ENCODE measurements at regions of chr13 and their contacts with region 1.

Region 1: DNA sequence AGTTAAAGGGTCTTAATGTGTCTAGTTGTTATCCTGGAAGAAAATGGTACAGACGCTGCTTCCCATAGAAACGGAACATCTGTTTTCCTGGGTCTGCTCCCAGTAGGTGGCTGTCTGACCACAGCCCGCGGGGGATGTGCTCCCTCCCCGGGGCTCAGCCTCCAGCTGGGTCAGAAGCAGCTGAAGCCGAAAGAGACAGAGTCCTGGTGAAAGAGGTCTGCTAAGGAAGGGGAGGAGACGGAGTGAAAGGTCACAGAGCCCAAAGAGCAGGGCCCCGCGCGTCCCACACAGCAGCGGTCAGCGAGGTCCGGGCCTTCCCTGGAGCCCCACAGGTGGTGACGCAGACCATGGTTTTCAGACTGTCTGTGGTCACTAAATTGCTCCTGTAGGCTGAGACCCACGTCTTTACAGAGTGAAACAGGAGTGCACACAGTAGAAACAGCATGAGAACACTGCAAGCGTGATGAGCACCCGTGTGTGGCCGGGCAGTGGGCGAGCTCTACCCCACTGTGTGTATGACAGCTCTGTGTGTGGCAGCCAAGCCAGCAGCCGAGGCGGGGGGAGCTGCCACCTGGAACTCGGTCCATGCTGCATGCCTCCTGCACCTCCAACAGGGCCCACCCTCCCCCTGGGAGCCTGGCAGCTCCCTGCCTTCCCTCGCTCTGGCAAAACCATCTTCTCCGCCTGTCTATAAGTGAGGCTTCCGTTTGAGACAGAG is 52.0 kb upstream of the C13orf46 start:
- DNase-seq: peak; percentile 31
- H3K4me3 ChIP-seq: peak overlapping the region; percentile 64
- H3K27ac ChIP-seq: peak overlapping the region; percentile 89
- H3K4me1 ChIP-seq: peaks cover 69% of the 10 kb centered on the region
- CTCF ChIP-seq: no peak; the same call in 1 of the 2 replicates

Region 2: DNA sequence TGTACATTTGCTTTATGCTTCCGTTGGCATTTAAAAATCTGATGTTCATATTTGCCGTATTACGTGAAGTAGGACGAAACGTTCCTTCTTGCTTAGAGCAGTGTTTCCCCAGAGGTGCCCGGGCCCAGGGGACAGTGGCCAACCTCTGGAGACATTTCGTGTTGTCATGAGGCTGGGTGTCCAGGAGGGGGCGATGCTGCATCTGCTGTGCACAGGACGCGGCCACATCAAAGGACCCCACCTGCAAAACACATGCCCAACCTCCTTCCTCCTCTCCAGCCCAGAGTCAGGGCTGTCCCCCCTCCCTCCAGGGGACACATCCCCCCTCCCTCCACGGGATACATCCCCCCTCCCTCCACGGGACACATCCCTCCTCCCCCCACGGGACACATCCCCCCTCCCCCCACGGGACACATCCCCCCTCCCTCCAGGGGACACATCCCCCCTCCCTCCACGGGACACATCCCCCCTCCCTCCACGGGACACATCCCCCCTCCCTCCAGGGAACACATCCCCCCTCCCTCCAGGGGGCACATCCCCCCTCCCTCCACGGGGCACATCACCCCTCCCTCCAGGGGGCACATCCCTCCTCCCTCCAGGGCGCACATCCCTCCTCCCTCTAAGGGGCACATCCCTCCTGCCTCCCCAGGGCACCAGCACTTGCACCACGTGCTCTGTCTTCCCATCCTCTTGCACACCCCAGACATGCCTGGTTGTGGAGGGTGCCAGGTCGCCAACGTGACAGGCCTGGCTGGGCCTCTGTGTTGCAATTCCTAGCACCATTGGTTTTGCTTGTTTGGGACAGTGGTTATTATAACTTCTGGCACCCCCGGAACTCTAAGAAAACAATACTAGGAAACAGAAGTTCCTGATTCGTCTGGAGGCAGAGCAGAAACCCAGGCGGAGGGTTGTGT is 208.7 kb before region 1 on chr13:
- CTCF ChIA-PET with region 1: no interaction called
- POLR2A ChIA-PET with region 1: no interaction called
- intact Hi-C with region 1: loop called (anchors 5 kb)
- DNase-seq: peak; percentile 83
- H3K4me3 ChIP-seq: peak overlapping the region; percentile 98
- H3K27ac ChIP-seq: peak overlapping the region; percentile 34
- H3K4me1 ChIP-seq: peaks cover 4% of the 10 kb centered on the region
- CTCF ChIP-seq: peak; percentile 70

Region 3: DNA sequence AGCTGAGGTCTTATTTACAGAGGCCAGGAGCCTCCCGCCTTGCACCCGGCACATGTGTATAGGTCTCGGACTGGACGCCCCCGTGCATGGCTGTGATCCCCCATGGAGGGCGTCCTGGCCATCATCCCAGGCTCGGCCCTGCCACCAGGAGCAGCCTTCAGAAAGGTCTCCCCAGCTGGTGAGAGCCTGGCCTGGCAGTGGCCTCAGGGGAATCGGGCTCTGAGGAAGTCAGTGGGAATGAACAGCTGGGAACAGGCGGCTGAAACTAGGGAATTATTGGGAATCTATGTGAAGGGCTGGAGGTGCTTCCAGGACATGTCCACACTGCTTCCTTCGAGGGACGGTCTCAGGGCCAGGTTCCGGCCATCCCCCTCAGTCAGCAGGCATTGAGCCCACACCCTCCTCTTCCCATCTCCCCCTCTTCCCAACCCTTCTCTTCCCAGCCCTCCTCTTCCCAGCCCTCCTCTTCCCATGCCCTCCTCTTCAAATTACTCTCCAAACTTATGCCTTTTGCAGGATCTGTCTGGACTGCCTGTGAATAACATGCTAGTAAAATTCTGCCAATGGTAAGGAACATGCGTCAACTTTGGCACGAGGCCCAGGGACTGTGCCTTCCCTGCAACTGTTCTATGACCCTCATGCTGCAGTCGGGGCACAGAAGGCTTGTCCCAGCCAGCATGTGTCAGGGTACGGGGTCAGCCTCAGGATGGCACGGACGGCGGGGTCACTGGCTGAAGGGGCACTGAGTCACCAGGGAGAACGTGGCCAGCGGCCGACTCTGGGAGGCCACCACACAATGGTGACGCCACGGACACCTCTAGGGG is 27.8 kb before region 1 on chr13:
- CTCF ChIA-PET with region 1: no interaction called
- POLR2A ChIA-PET with region 1: no interaction called
- intact Hi-C with region 1: no loop called
- DNase-seq: no peak
- H3K4me3 ChIP-seq: no peak overlapping the region
- H3K27ac ChIP-seq: no peak overlapping the region
- H3K4me1 ChIP-seq: no peaks in the 10 kb centered on the region
- CTCF ChIP-seq: no peak

Region 4: DNA sequence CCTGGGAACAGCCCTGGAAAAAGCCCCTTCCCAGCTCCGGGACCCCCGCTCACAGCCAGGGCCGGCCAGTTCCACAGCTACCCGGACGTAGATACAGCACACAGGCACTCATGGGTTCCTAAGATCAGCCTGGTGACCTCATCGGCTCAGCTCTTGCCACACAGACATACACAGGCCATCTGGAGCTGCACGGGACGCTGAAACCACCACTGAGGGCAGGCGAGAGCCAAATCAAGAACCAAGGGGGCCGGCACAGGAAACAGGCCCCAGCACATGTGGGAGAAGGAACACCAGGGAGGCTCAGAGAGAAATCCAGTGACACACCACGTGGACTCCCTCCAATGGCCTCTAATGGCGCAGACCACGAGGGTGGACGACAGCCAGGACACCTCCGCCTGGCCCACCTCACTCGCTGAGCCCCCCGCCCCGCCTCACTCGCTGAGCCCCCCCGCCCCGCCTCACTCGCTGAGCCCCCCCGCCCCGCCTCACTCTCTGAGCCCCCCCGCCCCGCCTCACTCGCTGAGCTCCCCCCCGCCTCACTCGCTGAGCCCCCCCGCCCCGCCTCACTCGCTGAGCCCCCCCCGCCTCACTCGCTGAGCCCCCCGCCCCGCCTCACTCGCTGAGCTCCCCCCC is 17.7 kb after region 1 on chr13:
- CTCF ChIA-PET with region 1: interaction called, 3 read pairs
- POLR2A ChIA-PET with region 1: no interaction called
- intact Hi-C with region 1: loop called (anchors 1 kb)
- DNase-seq: peak; percentile 86
- H3K4me3 ChIP-seq: no peak overlapping the region
- H3K27ac ChIP-seq: peak overlapping the region; percentile 31
- H3K4me1 ChIP-seq: peaks cover 36% of the 10 kb centered on the region
- CTCF ChIP-seq: peak; percentile 56

Region 5: GRCh38 chr13:114065141-114065925 is 39.5 kb after region 1 on chr13:
- CTCF ChIA-PET with region 1: interaction called, 3 read pairs
- POLR2A ChIA-PET with region 1: interaction called, 7 read pairs
- intact Hi-C with region 1: loop called (anchors 2 kb)
- DNase-seq: no peak
- H3K4me3 ChIP-seq: no peak overlapping the region
- H3K27ac ChIP-seq: no peak overlapping the region
- H3K4me1 ChIP-seq: peaks cover 42% of the 10 kb centered on the region
- CTCF ChIP-seq: no peak

Region 6: DNA sequence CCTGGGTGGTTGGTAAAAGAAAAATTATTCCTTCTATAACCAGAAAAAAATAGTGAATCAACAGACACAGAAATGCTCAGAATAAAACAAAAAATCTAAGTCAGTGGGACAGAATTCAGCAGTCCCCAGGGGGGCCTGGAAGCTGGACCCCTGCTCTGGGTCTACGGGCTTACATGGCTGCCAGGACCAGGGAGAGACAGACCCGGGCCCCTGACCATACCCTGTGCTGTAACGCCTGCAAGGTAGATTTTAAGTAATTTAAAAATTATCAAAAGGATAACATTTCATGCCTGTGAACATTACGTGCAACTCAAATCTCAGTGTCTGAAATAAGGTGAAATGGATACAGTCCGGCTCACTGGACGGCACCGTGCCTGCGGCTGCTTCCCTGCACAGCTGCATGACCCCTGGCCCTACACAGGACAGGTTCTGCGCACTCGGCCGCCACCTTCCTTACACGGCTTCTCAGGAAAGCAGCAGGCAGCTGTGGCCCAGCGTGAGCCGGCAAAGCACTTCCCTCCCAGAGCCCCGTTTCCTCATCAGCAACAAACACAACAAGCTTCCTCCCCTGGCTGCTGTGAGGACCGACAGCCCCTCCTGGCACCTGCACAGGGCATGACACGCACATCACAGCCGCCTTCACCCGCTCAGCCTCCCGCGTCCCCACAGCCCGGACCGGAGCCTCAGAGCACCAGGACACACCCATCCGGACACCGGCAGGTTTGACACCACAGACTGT is 84.4 kb after region 1 on chr13:
- CTCF ChIA-PET with region 1: interaction called, 3 read pairs
- POLR2A ChIA-PET with region 1: no interaction called
- intact Hi-C with region 1: loop called (anchors 2 kb)
- DNase-seq: peak; percentile 84
- H3K4me3 ChIP-seq: peak overlapping the region; percentile 14
- H3K27ac ChIP-seq: peak overlapping the region; percentile 55
- H3K4me1 ChIP-seq: peaks cover 29% of the 10 kb centered on the region
- CTCF ChIP-seq: peak; percentile 54

Region 7: DNA sequence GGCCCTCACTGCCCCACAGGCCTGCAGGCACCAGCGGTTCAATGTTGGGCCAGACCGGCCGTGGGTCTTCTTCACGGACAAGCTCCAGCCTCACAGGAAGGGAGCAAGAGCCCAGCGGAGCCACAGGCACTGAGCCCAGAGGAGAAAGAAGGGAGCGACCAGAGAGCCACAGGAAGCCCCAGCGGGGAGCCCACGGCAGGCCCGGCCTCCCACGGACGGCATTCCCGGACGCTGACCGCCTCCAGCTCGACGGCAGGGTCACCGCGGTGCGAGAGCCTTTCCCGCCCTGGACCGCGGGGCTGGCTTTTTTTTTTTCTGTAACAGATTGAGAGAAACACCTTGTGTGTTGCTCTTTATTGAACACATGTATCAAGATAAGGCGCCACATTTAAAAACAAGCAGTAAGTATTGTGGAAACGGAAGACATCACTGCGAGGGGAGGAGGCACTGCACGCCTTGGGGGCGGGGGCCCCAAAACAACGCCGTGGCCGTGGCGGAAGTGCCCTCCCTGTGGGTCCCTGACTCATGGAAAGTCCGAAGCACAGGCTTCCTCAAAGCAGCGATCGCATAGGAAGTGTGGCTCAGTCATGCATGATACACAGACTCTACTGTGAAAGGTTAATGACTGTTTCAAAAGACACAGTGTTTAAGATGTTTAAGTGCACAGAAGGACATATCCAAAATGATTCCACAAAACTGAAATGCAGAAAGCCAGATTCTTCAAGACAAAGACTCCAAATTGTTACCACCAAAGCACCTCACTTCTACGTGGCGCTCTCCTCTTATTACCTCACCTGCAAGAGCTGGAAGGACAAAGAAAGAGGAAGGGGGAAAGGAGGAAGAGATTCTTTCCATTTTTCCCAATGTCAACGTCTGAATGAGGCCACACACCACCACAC is 103.0 kb after region 1 on chr13:
- CTCF ChIA-PET with region 1: no interaction called
- POLR2A ChIA-PET with region 1: no interaction called
- intact Hi-C with region 1: loop called (anchors 2 kb)
- DNase-seq: peak; percentile 80
- H3K4me3 ChIP-seq: peak overlapping the region; percentile 47
- H3K27ac ChIP-seq: peak overlapping the region; percentile 34
- H3K4me1 ChIP-seq: peaks cover 40% of the 10 kb centered on the region
- CTCF ChIP-seq: no peak

Region 8: DNA sequence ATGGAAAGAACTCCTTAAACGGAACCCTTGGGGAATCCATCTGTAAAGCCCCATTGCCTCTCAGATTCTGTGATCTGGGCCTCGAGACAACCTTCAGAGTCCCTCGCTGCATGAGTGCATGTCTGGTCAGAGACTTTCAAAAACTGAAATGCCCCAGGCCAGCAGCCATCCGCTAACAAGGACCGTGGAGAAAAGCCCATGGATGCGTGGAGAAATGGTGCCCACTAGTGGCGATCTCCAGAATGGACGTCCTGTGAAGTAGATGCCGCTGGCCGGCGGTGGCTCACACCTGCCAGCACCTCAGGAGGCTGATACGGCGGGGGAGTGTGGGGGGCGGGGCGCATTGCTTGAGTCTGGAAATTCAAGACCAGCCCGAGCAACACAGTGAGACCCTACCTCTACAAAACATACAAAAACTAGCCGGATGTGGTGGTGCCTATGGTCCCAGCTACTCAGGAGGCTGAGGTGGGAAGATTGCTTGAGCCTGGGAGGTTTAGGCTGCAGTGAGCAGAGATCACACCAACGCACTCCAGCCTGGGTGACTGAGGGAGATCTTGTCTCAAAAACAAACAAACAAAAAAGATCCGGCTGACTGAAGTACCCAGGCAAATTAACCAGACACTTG is 200.9 kb after region 1 on chr13:
- CTCF ChIA-PET with region 1: no interaction called
- POLR2A ChIA-PET with region 1: no interaction called
- intact Hi-C with region 1: loop called (anchors 5 kb)
- DNase-seq: peak; percentile 72
- H3K4me3 ChIP-seq: no peak overlapping the region
- H3K27ac ChIP-seq: no peak overlapping the region
- H3K4me1 ChIP-seq: peaks cover 8% of the 10 kb centered on the region
- CTCF ChIP-seq: peak; percentile 76

Measured in OCI-LY7 (cell line).